HEK293T (cell line): ENCODE measurements at regions of chr14 and their contacts with region 1.

Region 1: GRCh38 chr14:81436296-81437138 is 36.4 kb upstream of the STON2 start:
- DNase-seq: peak; percentile 94

Region 2: GRCh38 chr14:81447021-81447764 is 10.7 kb after region 1 on chr14:
- CTCF ChIA-PET with region 1: interaction called, 14 read pairs
- POLR2A ChIA-PET with region 1: interaction called, 12 read pairs
- DNase-seq: no peak

Region 3: GRCh38 chr14:81453166-81453766 is 16.7 kb after region 1 on chr14:
- CTCF ChIA-PET with region 1: interaction called, 14 read pairs
- POLR2A ChIA-PET with region 1: interaction called, 12 read pairs
- DNase-seq: peak; percentile 46